AG04449 (cell line): ENCODE measurements at regions of chr6 and their contacts with region 1.

Region 1: DNA sequence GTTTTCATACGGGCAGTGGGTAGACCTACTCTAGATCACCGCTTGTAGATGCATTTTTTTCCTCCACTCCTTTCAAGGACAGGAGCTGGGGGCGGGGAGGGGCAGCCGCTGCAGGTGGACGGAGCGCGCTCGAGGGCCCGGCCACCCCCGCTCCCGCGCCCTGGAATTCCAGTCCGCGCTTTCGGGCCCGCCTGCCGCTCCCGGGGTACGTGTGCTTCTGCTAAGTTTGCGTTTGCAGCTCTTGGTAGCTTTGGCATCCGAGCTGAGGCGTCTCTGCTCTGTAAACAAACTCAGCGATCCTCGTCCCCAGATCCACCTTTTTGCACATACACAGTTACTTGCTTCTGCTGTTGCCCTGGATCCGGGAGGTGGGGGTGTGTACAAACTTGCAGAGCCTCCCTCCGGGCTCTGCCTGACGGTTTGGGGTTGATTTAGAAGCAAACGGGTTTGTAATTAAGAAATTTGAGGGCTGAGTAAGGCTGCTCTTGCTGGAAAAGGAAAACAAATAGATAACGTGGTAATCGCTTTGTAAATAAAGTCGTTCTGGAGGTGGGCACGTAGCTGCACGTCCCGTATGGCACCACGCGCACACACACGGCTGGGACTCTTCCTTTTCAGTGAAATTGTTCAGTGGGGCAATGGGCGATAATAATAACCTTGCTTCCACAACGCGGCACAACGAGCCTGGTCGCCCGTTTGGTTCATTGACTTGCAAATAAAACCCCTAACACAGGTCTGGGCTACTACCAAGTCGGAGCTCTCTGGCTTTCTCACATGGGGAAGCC is 976 bp upstream of the CITED2 start:
- DNase-seq: peak; percentile 99
- H3K4me3 ChIP-seq: peak overlapping the region; percentile 93
- CTCF ChIP-seq: no peak

Region 2: GRCh38 chr6:139392794-139393193 is 17.4 kb after region 1 on chr6:
- CTCF ChIA-PET with region 1: interaction called, 3 read pairs
- POLR2A ChIA-PET with region 1: interaction called, 12 read pairs
- DNase-seq: no peak
- H3K4me3 ChIP-seq: no peak overlapping the region
- CTCF ChIP-seq: no peak

Region 3: GRCh38 chr6:139588076-139588639 is 212.7 kb after region 1 on chr6:
- CTCF ChIA-PET with region 1: no interaction called
- POLR2A ChIA-PET with region 1: interaction called, 35 read pairs
- DNase-seq: no peak
- H3K4me3 ChIP-seq: no peak overlapping the region
- CTCF ChIP-seq: no peak

Region 4: DNA sequence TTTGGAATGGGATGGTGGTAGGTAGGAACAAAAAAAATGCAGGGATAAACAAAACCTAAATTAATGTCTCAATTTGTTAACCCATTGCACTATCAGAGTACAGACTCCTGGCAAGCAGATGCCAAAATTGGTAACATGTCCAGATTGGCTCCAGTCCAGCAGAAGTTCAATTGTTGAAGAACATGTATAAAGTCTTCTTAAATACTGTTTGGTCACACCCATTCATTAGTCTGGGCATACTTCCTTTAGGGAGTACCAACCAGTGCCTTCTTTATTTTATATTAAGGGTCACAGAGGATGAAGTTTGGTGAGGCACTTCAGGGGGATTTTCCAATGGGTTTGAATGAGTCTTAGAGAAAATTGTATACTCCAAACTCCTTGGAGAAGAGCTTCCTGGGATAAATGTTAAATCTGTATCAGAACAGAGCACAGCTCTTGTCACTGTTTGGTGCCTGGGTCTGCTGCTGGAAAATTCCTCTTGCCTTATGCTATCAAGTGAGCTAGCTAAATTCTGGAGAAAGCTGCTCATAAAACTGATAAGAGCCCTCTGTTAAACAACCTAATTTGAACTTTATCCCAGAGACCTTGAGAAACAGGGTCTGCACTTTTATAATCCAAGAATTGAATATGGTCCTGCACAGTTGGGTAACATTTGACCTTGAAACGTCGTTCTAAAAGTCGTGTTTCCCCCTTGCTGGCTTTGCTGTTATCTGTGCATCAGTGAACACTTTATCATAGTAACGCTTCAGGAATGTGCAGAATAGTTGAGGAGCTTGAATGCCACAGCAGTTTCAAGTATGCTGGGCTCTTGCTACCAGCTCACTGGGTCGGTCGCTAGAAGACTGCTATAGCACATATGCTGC is 333.1 kb after region 1 on chr6:
- CTCF ChIA-PET with region 1: no interaction called
- POLR2A ChIA-PET with region 1: interaction called, 26 read pairs
- DNase-seq: peak; percentile 56
- H3K4me3 ChIP-seq: no peak overlapping the region
- CTCF ChIP-seq: no peak

Region 5: GRCh38 chr6:139852488-139853140 is 477.2 kb after region 1 on chr6:
- CTCF ChIA-PET with region 1: interaction called, 5 read pairs
- POLR2A ChIA-PET with region 1: interaction called, 46 read pairs
- DNase-seq: peak; percentile 64
- H3K4me3 ChIP-seq: no peak overlapping the region
- CTCF ChIP-seq: no peak

Region 6: DNA sequence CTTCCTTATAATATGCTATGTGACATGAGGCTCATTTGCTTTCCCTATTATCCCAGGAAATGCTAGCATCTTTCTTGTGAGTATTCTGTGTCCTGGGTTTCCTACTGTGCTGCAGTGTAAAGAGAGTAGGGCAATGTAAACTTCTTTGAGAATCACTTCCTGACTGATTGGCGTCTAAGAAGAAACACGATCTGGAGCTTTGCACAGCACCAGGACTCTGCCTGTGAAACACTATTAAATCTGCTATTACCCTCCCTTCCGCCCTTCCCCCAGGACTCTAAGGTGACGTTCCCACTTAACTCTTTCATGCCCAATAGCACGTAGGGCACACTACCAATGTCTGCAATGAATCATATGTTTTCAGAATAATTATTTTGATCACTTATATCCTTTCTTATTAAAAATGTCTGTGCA is 606.4 kb after region 1 on chr6:
- CTCF ChIA-PET with region 1: interaction called, 8 read pairs
- POLR2A ChIA-PET with region 1: interaction called, 18 read pairs
- DNase-seq: no peak
- H3K4me3 ChIP-seq: no peak overlapping the region
- CTCF ChIP-seq: no peak

Region 7: GRCh38 chr6:140062043-140063020 is 686.9 kb after region 1 on chr6:
- CTCF ChIA-PET with region 1: interaction called, 3 read pairs
- POLR2A ChIA-PET with region 1: interaction called, 13 read pairs
- DNase-seq: peak; percentile 98
- H3K4me3 ChIP-seq: no peak overlapping the region
- CTCF ChIP-seq: no peak